Posterior cingulate gyrus (tissue), 11 donors: ENCODE measurements at regions of chr17 and their contacts with region 1.

Region 1: GRCh38 chr17:60639019-60639330 is 38.7 kb upstream of the BCAS3 start:
- DNase-seq: no peak

Region 2: GRCh38 chr17:60421273-60421934 is 217.6 kb before region 1 on chr17:
- intact Hi-C with region 1: loop called (anchors 1 kb)
- DNase-seq: peak in 9 of 10 donors; percentile 49 to 95 (median 67)

Region 3: DNA sequence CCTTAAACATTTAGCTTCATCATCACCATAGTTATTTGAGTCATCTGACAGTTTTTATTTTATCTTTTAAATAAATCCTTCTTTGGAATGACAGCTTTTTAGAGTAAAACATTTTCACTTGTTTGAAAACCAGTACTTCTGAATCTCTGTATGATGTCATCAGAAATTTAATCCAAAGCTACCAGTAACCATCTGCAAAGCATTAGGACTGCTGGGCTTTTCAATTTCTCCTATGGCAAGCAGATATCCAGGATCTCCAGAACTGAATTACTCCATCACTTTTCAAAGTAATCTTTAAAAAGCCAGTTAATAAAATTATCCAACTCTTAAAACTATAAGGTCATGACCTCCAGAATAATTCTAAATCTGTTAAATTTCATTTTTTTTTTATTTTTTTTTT is 165.2 kb before region 1 on chr17:
- intact Hi-C with region 1: no loop called
- DNase-seq: no peak

Region 4: DNA sequence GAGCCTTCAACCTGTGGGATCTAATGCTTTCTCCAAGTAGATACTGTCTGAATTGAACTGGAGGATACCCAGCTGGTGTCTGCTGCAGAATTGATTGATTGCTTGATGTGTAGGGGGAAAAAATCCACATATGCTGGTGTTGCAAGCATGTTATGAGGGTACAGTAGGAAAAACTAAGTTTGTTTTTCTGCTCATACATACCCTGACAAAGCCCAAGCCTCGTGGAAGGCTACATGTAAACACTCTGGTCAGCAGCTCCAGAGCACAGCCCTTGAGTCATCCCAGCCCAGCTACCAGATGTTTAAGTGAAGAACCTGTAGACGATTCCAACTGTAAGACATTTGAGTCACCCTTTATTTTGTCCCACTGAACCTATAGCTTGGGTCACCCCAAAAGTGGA is 103.5 kb before region 1 on chr17:
- intact Hi-C with region 1: no loop called
- DNase-seq: no peak

Region 5: DNA sequence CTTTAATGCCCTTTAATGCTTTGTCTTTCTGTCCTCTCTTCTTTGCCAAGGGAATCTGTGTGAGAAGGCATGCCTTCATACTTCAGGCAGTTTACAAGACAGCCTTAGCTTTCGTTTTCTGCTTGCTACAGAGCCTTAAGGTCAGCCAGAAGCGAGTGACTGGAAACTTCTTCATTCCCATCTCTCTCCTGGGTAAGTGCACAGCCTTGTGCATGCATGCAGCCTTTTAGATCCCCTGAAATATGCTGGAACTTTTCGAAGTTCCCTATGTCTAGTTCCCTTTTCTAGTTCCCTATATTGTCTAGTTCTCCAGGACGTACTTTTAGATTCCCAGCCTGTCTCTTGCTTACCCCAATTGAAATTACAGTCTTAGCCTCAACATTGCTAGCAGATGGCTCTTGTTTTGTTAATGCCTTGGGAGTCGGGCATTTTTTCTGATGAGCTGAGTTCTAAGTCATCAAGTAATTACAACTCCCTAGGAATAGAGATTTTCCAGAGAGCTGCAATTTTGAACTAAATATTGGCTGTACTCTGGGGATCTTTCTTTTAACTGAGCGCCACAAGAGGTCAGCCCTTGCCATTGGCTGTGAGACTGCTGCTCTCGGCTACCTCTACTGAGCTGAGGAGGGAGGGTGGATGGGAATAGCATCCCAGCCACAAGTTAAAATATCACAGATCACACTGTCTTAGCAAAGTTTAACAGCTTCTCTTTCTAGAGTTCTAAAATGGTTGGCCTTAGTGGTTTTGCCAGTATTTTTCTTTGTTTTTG is 61.6 kb before region 1 on chr17:
- intact Hi-C with region 1: loop called (anchors 1 kb)
- DNase-seq: peak in 6 of 10 donors; percentile 20 to 89 (median 48)

Region 6: DNA sequence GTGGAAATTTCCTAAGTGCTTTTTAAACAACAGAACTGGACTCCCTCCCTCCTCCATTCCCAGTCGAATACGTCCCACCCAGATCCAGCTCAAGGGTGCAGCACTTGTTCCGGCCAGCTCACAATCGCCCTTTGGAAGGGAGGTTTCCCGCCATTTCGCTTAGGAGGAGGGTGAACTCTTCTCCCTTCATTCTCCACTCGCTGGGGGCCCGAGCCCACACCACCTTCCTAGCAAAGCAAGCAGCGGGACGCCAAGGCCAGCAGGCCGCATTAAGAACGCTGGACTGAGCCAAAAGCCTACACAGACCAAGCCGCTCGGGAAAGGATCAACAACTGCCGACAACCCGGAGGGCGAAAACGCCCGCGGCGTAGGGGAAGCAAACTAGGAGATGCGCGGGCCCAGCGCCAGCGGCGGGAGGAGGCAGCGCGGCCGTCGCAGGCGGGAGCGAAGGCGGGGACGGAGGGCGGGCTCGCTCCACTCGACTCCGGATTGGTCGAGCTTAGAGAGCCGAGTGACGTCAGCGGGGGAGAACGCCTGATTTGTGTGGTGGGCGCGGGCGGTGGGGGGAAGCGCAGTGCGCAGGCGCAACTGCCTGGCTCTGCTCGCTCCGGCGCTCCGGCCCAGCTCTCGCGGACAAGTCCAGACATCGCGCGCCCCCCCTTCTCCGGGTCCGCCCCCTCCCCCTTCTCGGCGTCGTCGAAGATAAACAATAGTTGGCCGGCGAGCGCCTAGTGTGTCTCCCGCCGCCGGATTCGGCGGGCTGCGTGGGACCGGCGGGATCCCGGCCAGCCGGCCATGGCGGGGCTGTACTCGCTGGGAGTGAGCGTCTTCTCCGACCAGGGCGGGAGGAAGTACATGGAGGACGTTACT is 39.1 kb before region 1 on chr17 and contains the start of gene PPM1D:
- intact Hi-C with region 1: loop called (anchors 2 kb)
- DNase-seq: peak; percentile 98 to 100 (median 99)